ENCODE measurements at regions of chr6 and their contacts with region 1.

Region 1: DNA sequence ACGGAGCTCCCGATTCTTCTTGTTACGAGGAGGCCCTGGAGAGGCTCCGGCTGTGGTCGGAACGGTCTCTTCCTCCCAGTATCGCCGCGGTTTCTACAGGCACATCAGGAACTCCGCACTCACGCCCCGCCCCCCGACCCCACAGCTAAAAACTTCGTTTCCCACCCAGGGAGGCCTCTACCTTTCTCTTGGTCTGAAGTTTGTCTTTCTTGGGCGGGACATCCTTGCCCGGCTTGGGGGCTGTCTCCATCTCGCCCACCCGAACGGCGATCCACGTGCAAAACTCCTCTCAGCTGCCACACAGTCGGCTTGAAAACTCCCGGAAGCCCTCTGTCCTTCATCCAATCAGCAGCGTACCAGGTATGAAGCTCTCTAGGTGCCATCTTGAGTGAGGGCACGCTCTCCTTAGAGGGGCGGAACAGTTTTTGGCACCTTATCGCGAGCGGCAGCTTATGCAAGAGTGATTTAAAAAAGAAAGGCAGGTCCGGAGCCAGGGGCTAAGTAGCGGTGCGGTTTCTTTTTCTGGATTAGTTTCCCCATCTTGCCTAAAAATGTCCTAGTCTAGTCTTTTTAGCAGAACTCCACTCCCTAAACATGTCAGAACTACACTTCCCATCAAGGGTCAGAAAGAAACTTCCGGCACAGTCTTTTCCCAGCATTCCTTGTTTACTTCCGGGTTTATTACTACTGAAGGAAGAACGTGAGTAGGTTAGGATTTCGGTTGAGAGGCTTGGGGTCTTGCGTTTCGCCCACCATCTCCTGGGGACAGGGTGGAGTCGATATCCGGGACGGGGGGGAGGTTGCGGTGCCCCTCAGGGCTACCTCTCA is at the starts of genes PFDN6 and WDR46:
- DNase-seq: peak; percentile 53 to 91 (median 81)
- ATAC-seq: peak; percentile 96 to 97
- H3K4me3 Mint-ChIP-seq: peak within 1 kb of the TSS; percentile 87 to 100 (median 99)
- H3K27ac Mint-ChIP-seq: peak within 1 kb of the TSS; percentile 84 to 97 (median 94)
- H3K4me1 Mint-ChIP-seq: peaks cover 22 to 51% (median 48%) of the 10 kb centered on the region in 4 donors
- H3K27me3 Mint-ChIP-seq: no peaks in the 10 kb centered on the region
- polyA plus RNA-seq, gene PFDN6: 33.4 to 38.2 (median 35.5) TPM
- polyA plus RNA-seq, gene WDR46: 71.3 to 83.7 (median 74.1) TPM

Region 2: DNA sequence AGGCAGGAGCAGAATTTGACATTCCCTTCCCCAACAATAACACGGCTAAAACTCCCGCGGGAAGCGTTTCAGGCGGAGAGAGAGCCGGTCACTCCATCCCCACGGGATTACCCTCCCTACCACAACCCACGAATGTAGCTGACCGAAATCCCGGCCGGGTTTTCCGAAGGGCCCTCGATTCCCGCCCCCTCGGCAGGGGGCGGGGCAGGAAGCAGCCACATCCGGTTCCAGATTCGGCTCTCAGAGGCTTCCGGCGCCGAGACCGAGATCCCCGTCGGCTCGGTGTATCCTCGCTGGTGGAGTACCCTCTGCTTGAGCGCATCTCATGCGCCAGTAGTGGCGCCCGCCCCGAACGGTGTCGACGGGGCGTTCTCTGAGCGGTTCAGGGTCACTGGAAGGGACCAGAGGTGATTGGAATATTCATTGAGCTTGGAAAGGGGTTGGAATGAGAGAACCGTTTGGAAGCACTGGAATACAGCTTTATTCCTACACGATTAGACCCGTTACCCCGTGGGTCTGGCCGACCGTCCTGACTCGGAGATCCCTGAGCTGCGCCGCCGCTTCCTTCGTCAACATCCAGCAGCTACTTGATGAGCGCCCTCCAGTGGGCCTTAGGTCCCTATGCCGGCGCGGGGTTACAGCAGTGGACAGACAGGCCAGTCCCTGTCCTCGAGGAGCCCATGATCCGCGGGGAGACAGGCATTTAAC is 10.3 kb after region 1 on chr6:
- POLR2A ChIA-PET with region 1: interaction called, 75 read pairs
- DNase-seq: peak; percentile 86 to 95 (median 92)
- ATAC-seq: peak; percentile 82 to 88
- H3K4me3 Mint-ChIP-seq: peak overlapping the region; percentile 94 to 100 (median 98)
- H3K27ac Mint-ChIP-seq: peak overlapping the region; percentile 94 to 100 (median 99)
- H3K4me1 Mint-ChIP-seq: peaks cover 20 to 49% (median 43%) of the 10 kb centered on the region in 4 donors
- H3K27me3 Mint-ChIP-seq: peaks cover 0 to 2% (median 0%) of the 10 kb centered on the region in 5 donors

Measured in naive thymus-derived CD8-positive, alpha-beta T cell (primary cell).